Psoas muscle (tissue), 8 donors: ENCODE measurements at regions of chr6 and their contacts with region 1.

Region 1: GRCh38 chr6:157823001-157823527 is at the start of gene SNX9:
- DNase-seq: peak; percentile 84 to 91
- ATAC-seq: peak; percentile 89 to 92 (median 92)
- H3K4me3 ChIP-seq: peak within 1 kb of the TSS; percentile 92
- H3K27ac ChIP-seq: peak within 1 kb of the TSS; percentile 93
- H3K4me1 ChIP-seq: peaks cover 12% of the 10 kb centered on the region
- H3K27me3 ChIP-seq: no peaks in the 10 kb centered on the region
- CTCF ChIP-seq: no peak
- total RNA-seq, gene SNX9: 23.4 to 30.7 (median 29.4) TPM

Region 2: GRCh38 chr6:157756708-157757429 is 66.2 kb before region 1 on chr6:
- intact Hi-C with region 1: loop called in 1 of 2 experiments (anchors 5 kb)
- DNase-seq: peak; percentile 89 to 92
- ATAC-seq: peak; percentile 86 to 97 (median 92)
- H3K4me3 ChIP-seq: peak overlapping the region; percentile 37
- H3K27ac ChIP-seq: no peak overlapping the region
- H3K4me1 ChIP-seq: peaks cover 9% of the 10 kb centered on the region
- H3K27me3 ChIP-seq: no peaks in the 10 kb centered on the region
- CTCF ChIP-seq: peak; percentile 78

Region 3: DNA sequence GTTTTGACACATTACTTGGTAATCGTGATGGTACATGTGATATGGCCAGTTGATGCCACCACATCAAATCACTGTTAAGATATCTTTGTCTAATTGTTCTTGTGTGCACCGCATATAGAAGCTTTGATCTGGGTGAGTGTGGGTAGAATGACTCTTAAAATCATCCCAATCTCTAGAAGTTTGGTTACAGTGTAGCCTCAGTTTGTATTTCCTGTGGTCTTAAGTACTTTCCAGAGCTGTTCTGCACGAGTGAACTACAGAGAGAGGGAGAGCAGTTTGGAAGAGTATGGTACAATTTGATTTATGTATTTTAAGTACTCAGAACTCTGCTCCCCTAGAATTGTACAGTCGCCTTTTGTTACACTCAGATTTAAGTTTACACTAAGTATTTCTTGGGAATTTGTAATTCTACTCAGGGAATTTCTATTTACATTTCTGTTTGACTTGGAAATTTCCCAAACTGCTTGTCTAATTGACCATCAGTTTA is 37.5 kb after region 1 on chr6:
- intact Hi-C with region 1: no loop called
- DNase-seq: no peak
- ATAC-seq: no peak
- H3K4me3 ChIP-seq: no peak overlapping the region
- H3K27ac ChIP-seq: no peak overlapping the region
- H3K4me1 ChIP-seq: peaks cover 37% of the 10 kb centered on the region
- H3K27me3 ChIP-seq: no peaks in the 10 kb centered on the region
- CTCF ChIP-seq: no peak

Region 4: DNA sequence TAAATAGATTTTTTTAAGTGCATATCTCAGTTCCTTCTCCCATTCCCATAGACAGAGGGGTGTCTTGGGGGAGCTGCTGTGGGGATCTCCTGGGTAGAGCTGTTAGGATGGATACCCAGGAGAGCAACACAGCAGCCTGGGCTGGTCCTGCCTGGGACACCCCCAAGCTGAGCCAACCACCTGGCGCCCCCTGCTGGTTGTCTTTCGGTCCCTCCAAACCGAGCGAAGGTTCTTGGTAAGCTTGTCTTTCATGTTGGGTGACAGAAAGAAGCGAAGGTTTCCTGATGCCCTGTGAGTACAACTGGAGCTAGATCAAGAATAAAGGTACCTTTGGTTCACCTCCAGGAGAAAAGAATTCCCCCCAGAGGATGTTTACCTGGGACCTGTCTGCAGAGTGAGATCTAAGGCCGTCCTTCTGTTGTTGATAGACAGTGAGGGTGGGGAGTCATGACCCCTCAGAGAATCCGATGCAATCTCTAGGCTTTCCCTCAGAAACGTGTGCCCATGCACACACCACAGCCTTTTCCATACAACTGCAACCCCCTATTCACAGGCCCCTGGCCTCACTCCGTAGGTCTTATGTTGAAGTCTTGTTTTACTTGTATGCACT is 50.8 kb after region 1 on chr6:
- intact Hi-C with region 1: loop called in 1 of 2 experiments (anchors 10 kb)
- DNase-seq: peak; percentile 76 to 81
- ATAC-seq: peak; percentile 79 to 86 (median 86)
- H3K4me3 ChIP-seq: no peak overlapping the region
- H3K27ac ChIP-seq: no peak overlapping the region
- H3K4me1 ChIP-seq: no peaks in the 10 kb centered on the region
- H3K27me3 ChIP-seq: peaks cover 0 to 3% (median 0%) of the 10 kb centered on the region in 3 donors
- CTCF ChIP-seq: peak; percentile 82

Region 5: DNA sequence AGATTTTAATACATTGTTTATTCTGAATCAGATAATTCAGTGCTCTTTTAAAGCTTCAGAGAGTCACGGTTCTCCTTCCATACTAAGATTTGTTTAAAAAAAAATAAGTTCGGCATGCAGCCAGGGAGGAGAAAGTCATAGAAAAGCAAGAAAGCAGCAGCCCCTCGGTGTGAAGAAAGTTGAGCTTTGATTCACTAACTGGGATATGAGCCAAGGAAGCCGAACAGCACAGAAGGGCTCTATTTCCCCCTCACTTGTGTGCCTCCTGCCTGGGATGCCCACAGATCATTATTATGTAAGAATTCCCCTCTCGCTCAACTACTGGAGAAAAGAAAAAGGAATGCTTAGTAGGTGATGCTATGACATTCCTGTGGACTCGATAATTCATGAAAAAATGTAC is 89.3 kb after region 1 on chr6:
- intact Hi-C with region 1: no loop called
- DNase-seq: no peak
- ATAC-seq: no peak
- H3K4me3 ChIP-seq: no peak overlapping the region
- H3K27ac ChIP-seq: no peak overlapping the region
- H3K4me1 ChIP-seq: no peaks in the 10 kb centered on the region
- H3K27me3 ChIP-seq: no peaks in the 10 kb centered on the region
- CTCF ChIP-seq: no peak